ENCODE measurements at regions of chrX and their contacts with region 1.

Region 1: GRCh38 chrX:12080265-12080664 is 58.0 kb upstream of the FRMPD4 start:
- DNase-seq: peak; percentile 62
- H3K4me3 Mint-ChIP-seq: no peak overlapping the region
- H3K27ac Mint-ChIP-seq: no peak overlapping the region
- H3K4me1 Mint-ChIP-seq: no peaks in the 10 kb centered on the region
- H3K27me3 Mint-ChIP-seq: peaks cover 51% of the 10 kb centered on the region
- CTCF ChIP-seq: peak; percentile 65

Region 2: DNA sequence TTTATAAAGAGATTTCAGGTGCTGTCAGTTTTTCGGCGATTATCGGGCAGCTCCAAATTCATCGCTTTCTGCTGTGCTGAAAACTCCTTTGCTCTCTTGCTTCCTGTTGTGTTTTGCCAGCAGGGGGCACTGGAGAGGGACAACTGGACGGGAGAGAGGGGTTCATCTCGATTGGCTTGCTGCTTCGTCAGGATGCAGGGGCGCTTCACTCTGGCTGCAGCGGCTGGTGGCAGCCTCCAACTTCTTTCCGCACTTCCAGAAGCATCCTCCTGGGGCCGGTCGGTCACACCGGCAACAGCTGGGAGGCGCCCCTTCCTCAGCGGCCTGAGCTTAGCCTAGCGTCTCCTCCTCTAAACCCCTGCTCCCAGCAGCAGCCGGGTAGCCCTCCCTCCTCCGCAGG is 292.7 kb before region 1 on chrX:
- CTCF ChIA-PET with region 1: no interaction called
- POLR2A ChIA-PET with region 1: no interaction called
- intact Hi-C with region 1: loop called (anchors 10 kb)
- DNase-seq: peak; percentile 67
- H3K4me3 Mint-ChIP-seq: peak overlapping the region; percentile 35
- H3K27ac Mint-ChIP-seq: no peak overlapping the region
- H3K4me1 Mint-ChIP-seq: no peaks in the 10 kb centered on the region
- H3K27me3 Mint-ChIP-seq: peaks cover 10% of the 10 kb centered on the region
- CTCF ChIP-seq: peak; percentile 46

Region 3: DNA sequence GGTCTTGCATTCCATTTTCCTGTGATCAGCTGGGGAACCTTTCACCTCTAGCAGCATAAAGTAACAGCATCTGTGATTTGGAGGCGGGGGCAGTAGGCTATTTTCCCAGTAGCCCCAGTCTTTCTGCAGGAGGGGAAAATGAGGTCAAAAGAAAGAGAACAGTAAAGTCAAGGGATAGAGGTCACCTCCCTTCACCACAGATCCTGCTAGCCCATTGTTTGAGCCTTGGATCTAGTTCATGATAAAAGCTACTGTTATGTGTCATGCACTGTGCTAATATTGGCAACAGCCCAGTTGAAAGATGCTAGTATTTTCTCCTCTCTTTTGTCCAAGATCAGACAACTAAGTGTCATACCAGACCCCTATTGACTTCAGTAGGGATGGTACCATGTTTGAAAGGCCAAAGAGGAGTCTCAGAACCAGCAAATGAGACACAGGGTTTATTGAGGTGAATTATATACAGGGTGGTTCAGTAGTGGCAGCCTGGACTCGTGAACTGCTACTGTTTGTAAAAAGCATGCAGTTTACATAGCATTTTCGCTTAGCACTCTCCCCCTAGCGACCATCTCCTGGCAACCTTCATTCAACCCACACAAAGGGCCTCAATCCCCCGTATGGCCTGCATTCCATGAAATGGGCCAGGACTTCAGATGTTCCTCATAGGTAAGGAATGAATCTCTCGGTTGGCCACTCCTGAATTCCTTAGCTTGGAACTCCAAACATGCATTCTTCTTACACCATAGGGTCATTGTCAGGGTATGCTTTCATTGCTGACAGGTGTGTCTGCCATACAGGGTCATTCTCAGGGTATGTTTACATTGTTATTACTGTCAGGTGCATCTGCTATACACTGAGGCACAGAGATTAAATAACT is 112.0 kb before region 1 on chrX:
- CTCF ChIA-PET with region 1: interaction called, 3 read pairs
- POLR2A ChIA-PET with region 1: no interaction called
- intact Hi-C with region 1: loop called (anchors 5 kb)
- DNase-seq: peak; percentile 24
- H3K4me3 Mint-ChIP-seq: no peak overlapping the region
- H3K27ac Mint-ChIP-seq: no peak overlapping the region
- H3K4me1 Mint-ChIP-seq: no peaks in the 10 kb centered on the region
- H3K27me3 Mint-ChIP-seq: no peaks in the 10 kb centered on the region
- CTCF ChIP-seq: no peak

Region 4: DNA sequence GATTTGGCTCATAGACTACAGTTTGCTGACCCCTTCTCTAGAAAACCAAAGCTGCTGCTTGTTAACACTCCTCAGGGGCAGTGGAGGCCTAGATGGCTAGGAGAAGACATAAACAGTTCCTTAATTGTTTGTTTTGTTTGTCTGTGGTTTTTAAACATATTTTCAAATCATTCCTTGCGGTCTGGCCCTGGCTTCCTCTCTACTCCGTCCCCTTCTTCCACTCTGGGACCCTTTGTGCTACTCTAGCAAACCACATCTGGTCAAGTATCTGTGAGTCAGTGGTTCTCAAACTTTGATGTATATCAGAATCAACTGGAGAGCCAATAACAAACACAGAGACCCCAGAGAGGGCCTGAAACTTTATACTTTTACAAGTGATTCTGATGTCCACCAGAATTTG is 94.1 kb after region 1 on chrX:
- CTCF ChIA-PET with region 1: no interaction called
- POLR2A ChIA-PET with region 1: no interaction called
- intact Hi-C with region 1: no loop called
- DNase-seq: no peak
- H3K4me3 Mint-ChIP-seq: no peak overlapping the region
- H3K27ac Mint-ChIP-seq: no peak overlapping the region
- H3K4me1 Mint-ChIP-seq: peaks cover 6% of the 10 kb centered on the region
- H3K27me3 Mint-ChIP-seq: no peaks in the 10 kb centered on the region
- CTCF ChIP-seq: no peak

Region 5: GRCh38 chrX:12447448-12448064 is 367.3 kb after region 1 on chrX:
- CTCF ChIA-PET with region 1: interaction called, 8 read pairs
- POLR2A ChIA-PET with region 1: no interaction called
- intact Hi-C with region 1: loop called (anchors 1 kb)
- DNase-seq: peak; percentile 80
- H3K4me3 Mint-ChIP-seq: no peak overlapping the region
- H3K27ac Mint-ChIP-seq: peak overlapping the region; percentile 92
- H3K4me1 Mint-ChIP-seq: peaks cover 18% of the 10 kb centered on the region
- H3K27me3 Mint-ChIP-seq: no peaks in the 10 kb centered on the region
- CTCF ChIP-seq: peak; percentile 22

Region 6: GRCh38 chrX:12567857-12568256 is 487.6 kb after region 1 on chrX:
- CTCF ChIA-PET with region 1: interaction called, 6 read pairs
- POLR2A ChIA-PET with region 1: interaction called, 4 read pairs
- intact Hi-C with region 1: loop called (anchors 1 kb)
- DNase-seq: peak; percentile 39
- H3K4me3 Mint-ChIP-seq: no peak overlapping the region
- H3K27ac Mint-ChIP-seq: no peak overlapping the region
- H3K4me1 Mint-ChIP-seq: no peaks in the 10 kb centered on the region
- H3K27me3 Mint-ChIP-seq: no peaks in the 10 kb centered on the region
- CTCF ChIP-seq: peak; percentile 51

Region 7: GRCh38 chrX:12771445-12772069 is 691.3 kb after region 1 on chrX:
- CTCF ChIA-PET with region 1: no interaction called
- POLR2A ChIA-PET with region 1: no interaction called
- intact Hi-C with region 1: loop called (anchors 5 kb)
- DNase-seq: no peak
- H3K4me3 Mint-ChIP-seq: no peak overlapping the region
- H3K27ac Mint-ChIP-seq: no peak overlapping the region
- H3K4me1 Mint-ChIP-seq: no peaks in the 10 kb centered on the region
- H3K27me3 Mint-ChIP-seq: peaks cover 66% of the 10 kb centered on the region
- CTCF ChIP-seq: peak; percentile 26

Region 8: GRCh38 chrX:12901486-12901885 is 821.2 kb after region 1 on chrX:
- CTCF ChIA-PET with region 1: interaction called, 3 read pairs
- POLR2A ChIA-PET with region 1: no interaction called
- intact Hi-C with region 1: loop called (anchors 5 kb)
- DNase-seq: peak; percentile 76
- H3K4me3 Mint-ChIP-seq: no peak overlapping the region
- H3K27ac Mint-ChIP-seq: no peak overlapping the region
- H3K4me1 Mint-ChIP-seq: peaks cover 8% of the 10 kb centered on the region
- H3K27me3 Mint-ChIP-seq: peaks cover 54% of the 10 kb centered on the region
- CTCF ChIP-seq: peak; percentile 68

Measured in MCF 10A (cell line).